ENCODE measurements at regions of chr1 and their contacts with region 1.

Region 1: DNA sequence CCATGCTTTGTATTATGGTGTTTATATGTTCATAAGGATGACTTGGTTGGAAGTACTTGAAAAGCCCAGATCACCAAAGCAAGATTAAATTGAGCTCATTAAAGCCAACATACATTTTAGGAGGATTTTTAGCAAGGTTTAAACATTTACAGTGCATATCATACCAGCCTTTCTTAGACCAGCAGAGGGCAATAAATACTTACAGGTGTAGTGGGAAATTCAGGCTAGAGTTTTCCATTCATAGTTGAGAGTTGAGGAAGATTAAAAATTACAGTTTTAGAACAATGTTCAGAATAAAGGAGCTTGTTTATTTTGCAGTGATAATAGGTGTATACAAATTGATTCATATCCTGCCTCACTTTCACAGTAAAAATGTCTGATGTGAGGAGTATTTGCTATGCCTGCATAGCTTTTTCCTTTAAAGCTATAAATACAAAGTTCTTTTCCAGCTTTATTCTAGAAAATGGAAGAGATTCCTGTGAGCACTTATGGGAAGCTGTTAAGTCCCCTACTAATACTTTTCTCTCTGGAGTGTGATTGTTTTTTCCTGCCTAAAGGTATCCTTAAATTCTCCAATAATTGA is 35.3 kb downstream of the DTL start:
- DNase-seq: peak; percentile 72
- H3K4me3 ChIP-seq: no peak overlapping the region
- H3K27ac ChIP-seq: no peak overlapping the region
- H3K4me1 ChIP-seq: peaks cover 23% of the 10 kb centered on the region
- H3K27me3 ChIP-seq: no peaks in the 10 kb centered on the region
- CTCF ChIP-seq: peak; percentile 48 to 49
- POLR2A ChIP-seq: no peak

Region 2: GRCh38 chr1:211654838-211655787 is 415.7 kb before region 1 on chr1:
- CTCF ChIA-PET with region 1: no interaction called
- POLR2A ChIA-PET with region 1: no interaction called
- dilution Hi-C with region 1: no loop called
- intact Hi-C with region 1: no loop called
- DNase-seq: peak; percentile 87
- H3K4me3 ChIP-seq: no peak overlapping the region
- H3K27ac ChIP-seq: peak overlapping the region; percentile 80
- H3K4me1 ChIP-seq: peaks cover 20% of the 10 kb centered on the region
- H3K27me3 ChIP-seq: no peaks in the 10 kb centered on the region
- CTCF ChIP-seq: peak; percentile 89 to 96
- POLR2A ChIP-seq: no peak

Region 3: DNA sequence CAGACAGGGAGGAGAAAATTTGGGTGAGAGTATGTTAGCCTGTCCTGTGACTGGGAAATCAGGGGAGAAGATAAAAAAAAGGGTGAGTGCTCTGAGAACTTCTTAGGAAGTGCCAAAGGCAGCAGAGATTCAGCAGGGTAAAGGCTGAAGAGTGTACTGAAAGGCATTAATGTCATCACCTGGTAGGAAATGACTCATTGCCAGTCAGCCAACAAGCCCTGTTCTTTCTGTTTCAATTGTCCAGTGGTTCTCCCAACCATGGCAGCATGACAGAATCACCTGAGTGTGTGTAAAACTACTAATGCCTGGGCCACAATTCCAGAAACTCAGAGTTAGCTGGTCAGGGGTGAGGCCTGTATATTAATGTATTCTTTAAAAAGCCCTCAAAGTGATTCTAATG is 119.0 kb before region 1 on chr1:
- CTCF ChIA-PET with region 1: no interaction called
- POLR2A ChIA-PET with region 1: no interaction called
- dilution Hi-C with region 1: no loop called
- intact Hi-C with region 1: no loop called
- DNase-seq: peak; percentile 67
- H3K4me3 ChIP-seq: no peak overlapping the region
- H3K27ac ChIP-seq: peak overlapping the region; percentile 48
- H3K4me1 ChIP-seq: peaks cover 17% of the 10 kb centered on the region
- H3K27me3 ChIP-seq: no peaks in the 10 kb centered on the region
- CTCF ChIP-seq: no peak
- POLR2A ChIP-seq: no peak

Region 4: GRCh38 chr1:212021563-212021962 is 49.2 kb before region 1 on chr1:
- CTCF ChIA-PET with region 1: no interaction called
- POLR2A ChIA-PET with region 1: no interaction called
- dilution Hi-C with region 1: no loop called
- intact Hi-C with region 1: no loop called
- DNase-seq: no peak
- H3K4me3 ChIP-seq: no peak overlapping the region
- H3K27ac ChIP-seq: no peak overlapping the region
- H3K4me1 ChIP-seq: no peaks in the 10 kb centered on the region
- H3K27me3 ChIP-seq: no peaks in the 10 kb centered on the region
- CTCF ChIP-seq: no peak
- POLR2A ChIP-seq: no peak

Region 5: DNA sequence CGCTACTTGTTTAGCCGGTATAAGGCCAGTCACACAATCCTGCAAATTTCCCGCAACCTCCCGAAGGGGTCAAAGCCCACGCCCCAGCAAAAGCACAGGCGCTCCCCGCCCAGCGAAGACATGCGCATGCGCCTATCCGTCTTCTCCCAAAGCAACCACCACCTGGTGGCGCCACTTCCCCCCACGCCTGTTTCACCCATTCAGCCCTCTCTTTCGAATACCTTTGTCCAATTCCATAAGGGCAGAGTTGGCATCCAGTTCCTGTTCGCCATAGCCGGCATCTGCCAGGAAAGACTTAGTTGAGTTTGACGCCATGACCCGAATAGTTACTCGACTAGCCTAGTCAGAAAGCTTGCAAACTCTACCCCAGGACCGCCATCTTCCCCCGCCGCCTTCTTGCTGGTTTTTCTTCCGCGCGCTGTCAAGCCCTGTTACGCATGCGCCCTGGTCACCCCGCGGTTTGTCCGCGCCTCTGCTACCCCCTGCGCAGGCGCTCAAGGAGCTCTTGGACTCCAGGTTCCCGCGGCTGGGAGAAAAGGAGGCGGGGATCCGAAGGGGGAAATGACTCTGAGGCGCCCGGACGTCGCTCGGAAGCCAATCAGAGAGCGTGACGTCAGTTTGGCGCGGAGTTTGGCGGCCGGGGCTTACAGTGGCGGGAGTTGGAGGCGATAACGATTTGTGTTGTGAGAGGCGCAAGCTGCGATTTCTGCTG is 35.5 kb before region 1 on chr1 and contains the starts of genes DTL and INTS7:
- CTCF ChIA-PET with region 1: interaction called, 34 read pairs
- POLR2A ChIA-PET with region 1: interaction called, 4 read pairs
- dilution Hi-C with region 1: no loop called
- intact Hi-C with region 1: no loop called
- DNase-seq: peak; percentile 99
- H3K4me3 ChIP-seq: peak within 1 kb of the TSS; percentile 70 to 94 (median 78)
- H3K27ac ChIP-seq: peak within 1 kb of the TSS; percentile 71
- H3K4me1 ChIP-seq: peaks cover 36% of the 10 kb centered on the region
- H3K27me3 ChIP-seq: no peaks in the 10 kb centered on the region
- CTCF ChIP-seq: peak; percentile 90 to 95
- POLR2A ChIP-seq: peak; percentile 76
- total RNA-seq, gene DTL: 26.5 and 27.2 TPM in 2 replicates
- total RNA-seq, gene INTS7: 16.1 and 18.1 TPM in 2 replicates

Region 6: GRCh38 chr1:212152308-212152693 is 81.5 kb after region 1 on chr1:
- CTCF ChIA-PET with region 1: interaction called, 19 read pairs
- POLR2A ChIA-PET with region 1: no interaction called
- dilution Hi-C with region 1: no loop called
- intact Hi-C with region 1: no loop called
- DNase-seq: peak; percentile 74
- H3K4me3 ChIP-seq: no peak overlapping the region
- H3K27ac ChIP-seq: no peak overlapping the region
- H3K4me1 ChIP-seq: peaks cover 10% of the 10 kb centered on the region
- H3K27me3 ChIP-seq: no peaks in the 10 kb centered on the region
- CTCF ChIP-seq: no peak
- POLR2A ChIP-seq: no peak

Region 7: DNA sequence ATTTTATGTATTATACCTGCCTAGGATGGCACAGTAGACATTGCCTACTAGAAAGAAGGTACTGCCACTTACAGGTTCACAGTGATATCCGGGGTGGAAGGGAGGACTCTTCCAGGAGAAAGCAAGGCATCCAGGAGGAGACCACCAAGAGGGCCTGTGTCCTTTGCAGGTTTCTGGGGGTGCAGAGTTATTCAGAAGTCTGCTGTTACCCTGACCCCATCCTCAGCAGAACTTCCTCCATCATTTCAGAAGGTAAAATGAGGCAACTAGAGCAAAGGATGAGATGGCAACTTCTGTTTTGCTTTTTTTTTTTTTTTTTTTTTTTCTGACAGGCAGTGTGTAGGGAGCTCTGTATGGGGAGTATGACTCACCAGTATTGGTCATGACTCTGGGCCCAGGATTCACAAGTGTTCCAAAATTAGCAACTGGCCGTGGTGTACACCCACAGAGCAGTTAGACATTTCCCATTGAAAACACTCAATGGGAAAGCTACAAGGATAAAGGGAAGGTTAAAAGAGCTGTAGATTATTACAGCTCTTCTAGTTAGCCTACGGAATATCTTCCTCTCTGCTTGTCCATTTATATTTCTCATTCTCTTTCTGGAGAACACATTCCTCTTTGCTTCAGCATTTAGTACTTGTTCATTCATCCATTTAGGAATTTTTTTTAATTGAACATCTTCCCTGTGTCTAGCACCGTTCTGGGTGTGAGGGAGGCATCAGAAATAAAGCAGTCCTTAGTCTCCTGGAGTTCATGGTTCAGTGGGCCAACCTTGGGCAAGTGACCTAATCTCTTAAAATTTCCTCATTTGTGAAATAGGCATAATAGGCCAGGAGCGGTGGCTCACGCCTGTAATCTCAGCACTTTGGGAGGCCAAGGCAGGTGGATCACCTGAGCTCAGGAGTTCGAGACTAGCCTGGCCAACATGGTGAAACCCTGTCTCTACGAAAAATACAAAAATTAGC is 163.9 kb after region 1 on chr1:
- CTCF ChIA-PET with region 1: interaction called, 14 read pairs
- POLR2A ChIA-PET with region 1: no interaction called
- dilution Hi-C with region 1: no loop called
- intact Hi-C with region 1: no loop called
- DNase-seq: peak; percentile 71
- H3K4me3 ChIP-seq: no peak overlapping the region
- H3K27ac ChIP-seq: no peak overlapping the region
- H3K4me1 ChIP-seq: peaks cover 12% of the 10 kb centered on the region
- H3K27me3 ChIP-seq: peaks cover 2 to 3% of the 10 kb centered on the region in 2 experiments
- CTCF ChIP-seq: no peak
- POLR2A ChIP-seq: no peak

Region 8: GRCh38 chr1:212291505-212292134 is 220.8 kb after region 1 on chr1:
- CTCF ChIA-PET with region 1: interaction called, 113 read pairs
- POLR2A ChIA-PET with region 1: interaction called, 3 read pairs
- dilution Hi-C with region 1: no loop called
- intact Hi-C with region 1: loop called (anchors 1 kb)
- DNase-seq: peak; percentile 62
- H3K4me3 ChIP-seq: no peak overlapping the region
- H3K27ac ChIP-seq: no peak overlapping the region
- H3K4me1 ChIP-seq: peaks cover 27% of the 10 kb centered on the region
- H3K27me3 ChIP-seq: no peaks in the 10 kb centered on the region
- CTCF ChIP-seq: peak; percentile 53 to 54
- POLR2A ChIP-seq: no peak

Region 9: GRCh38 chr1:212346601-212347000 is 275.8 kb after region 1 on chr1:
- CTCF ChIA-PET with region 1: interaction called, 18 read pairs
- POLR2A ChIA-PET with region 1: no interaction called
- dilution Hi-C with region 1: no loop called
- intact Hi-C with region 1: no loop called
- DNase-seq: no peak
- H3K4me3 ChIP-seq: no peak overlapping the region
- H3K27ac ChIP-seq: no peak overlapping the region
- H3K4me1 ChIP-seq: no peaks in the 10 kb centered on the region
- H3K27me3 ChIP-seq: no peaks in the 10 kb centered on the region
- CTCF ChIP-seq: no peak
- POLR2A ChIP-seq: no peak

Region 10: DNA sequence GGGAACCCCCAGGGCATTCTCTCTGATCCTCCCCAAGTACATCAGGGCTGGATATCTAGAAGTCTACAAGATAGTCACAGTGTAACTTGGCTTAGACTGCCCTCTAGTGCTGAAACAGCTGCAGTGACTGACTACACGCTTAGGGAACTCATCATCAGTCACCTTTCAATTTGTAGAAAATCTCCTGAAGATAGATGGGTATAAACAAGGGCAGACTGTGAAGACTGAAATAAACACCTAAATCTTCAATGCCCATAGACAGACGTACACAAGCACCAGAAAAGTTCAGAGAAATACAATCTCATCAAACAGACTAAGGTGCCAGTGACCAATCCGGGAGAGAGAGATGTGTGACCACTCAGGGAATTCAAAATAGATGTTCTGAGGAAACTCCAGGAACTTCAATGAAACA is 297.3 kb after region 1 on chr1:
- CTCF ChIA-PET with region 1: interaction called, 148 read pairs
- POLR2A ChIA-PET with region 1: no interaction called
- dilution Hi-C with region 1: no loop called
- intact Hi-C with region 1: loop called (anchors 1 kb)
- DNase-seq: peak; percentile 68
- H3K4me3 ChIP-seq: no peak overlapping the region
- H3K27ac ChIP-seq: no peak overlapping the region
- H3K4me1 ChIP-seq: no peaks in the 10 kb centered on the region
- H3K27me3 ChIP-seq: no peaks in the 10 kb centered on the region
- CTCF ChIP-seq: peak; percentile 77 to 78
- POLR2A ChIP-seq: no peak

Region 11: DNA sequence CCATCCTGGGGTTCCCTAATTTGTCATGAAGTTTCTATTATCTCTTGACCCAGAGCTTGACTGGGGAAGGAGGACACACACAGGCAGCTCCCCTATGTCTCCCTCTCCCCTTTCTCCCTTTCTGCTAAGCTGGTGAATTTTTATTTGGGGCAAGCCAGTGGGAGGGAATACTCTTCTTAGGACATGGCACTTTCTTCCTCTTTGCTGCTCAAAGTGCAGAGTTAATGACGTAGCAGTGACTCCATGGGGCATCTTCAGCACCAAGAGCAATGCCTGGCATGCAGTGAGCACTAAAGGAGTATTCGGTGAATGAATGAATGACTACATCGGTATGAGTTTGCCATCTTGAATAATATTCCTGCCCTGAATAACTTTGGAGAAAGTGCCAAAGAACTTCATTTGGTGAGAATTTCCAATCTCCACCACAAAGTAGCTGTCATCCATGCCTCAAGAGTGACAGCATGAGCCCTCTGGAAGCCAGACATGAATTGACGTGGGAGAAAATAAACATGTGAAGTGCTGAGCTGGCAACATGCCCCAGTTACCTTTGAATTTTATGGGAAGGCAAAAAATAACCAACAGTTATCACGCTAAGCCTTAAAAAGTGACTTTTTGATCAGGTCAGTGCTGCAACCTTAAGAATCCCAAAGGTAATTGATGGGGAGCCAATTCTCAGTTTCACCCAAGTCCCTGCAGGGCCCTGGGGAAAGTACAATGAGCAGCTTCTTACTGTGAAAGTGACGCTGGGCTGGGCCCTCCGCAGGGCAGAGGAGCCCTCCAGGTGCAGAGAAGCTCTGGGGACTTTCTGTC is 515.6 kb after region 1 on chr1:
- CTCF ChIA-PET with region 1: no interaction called
- POLR2A ChIA-PET with region 1: no interaction called
- dilution Hi-C with region 1: no loop called
- intact Hi-C with region 1: no loop called
- DNase-seq: no peak
- H3K4me3 ChIP-seq: no peak overlapping the region
- H3K27ac ChIP-seq: no peak overlapping the region
- H3K4me1 ChIP-seq: no peaks in the 10 kb centered on the region
- H3K27me3 ChIP-seq: peaks cover 28 to 50% of the 10 kb centered on the region in 2 experiments
- CTCF ChIP-seq: no peak
- POLR2A ChIP-seq: no peak